BJ (cell line): ENCODE measurements at regions of chr11 and their contacts with region 1.

Region 1: GRCh38 chr11:65593518-65594298 is 1.9 kb downstream of the KCNK7 start:
- DNase-seq: no peak
- H3K4me3 ChIP-seq: no peak overlapping the region
- H3K27me3 ChIP-seq: no peaks in the 10 kb centered on the region
- CTCF ChIP-seq: peak; percentile 78

Region 2: GRCh38 chr11:65308281-65309093 is 285.2 kb before region 1 on chr11:
- CTCF ChIA-PET with region 1: no interaction called
- POLR2A ChIA-PET with region 1: no interaction called
- DNase-seq: no peak
- H3K4me3 ChIP-seq: no peak overlapping the region
- H3K27me3 ChIP-seq: no peaks in the 10 kb centered on the region
- CTCF ChIP-seq: no peak

Region 3: DNA sequence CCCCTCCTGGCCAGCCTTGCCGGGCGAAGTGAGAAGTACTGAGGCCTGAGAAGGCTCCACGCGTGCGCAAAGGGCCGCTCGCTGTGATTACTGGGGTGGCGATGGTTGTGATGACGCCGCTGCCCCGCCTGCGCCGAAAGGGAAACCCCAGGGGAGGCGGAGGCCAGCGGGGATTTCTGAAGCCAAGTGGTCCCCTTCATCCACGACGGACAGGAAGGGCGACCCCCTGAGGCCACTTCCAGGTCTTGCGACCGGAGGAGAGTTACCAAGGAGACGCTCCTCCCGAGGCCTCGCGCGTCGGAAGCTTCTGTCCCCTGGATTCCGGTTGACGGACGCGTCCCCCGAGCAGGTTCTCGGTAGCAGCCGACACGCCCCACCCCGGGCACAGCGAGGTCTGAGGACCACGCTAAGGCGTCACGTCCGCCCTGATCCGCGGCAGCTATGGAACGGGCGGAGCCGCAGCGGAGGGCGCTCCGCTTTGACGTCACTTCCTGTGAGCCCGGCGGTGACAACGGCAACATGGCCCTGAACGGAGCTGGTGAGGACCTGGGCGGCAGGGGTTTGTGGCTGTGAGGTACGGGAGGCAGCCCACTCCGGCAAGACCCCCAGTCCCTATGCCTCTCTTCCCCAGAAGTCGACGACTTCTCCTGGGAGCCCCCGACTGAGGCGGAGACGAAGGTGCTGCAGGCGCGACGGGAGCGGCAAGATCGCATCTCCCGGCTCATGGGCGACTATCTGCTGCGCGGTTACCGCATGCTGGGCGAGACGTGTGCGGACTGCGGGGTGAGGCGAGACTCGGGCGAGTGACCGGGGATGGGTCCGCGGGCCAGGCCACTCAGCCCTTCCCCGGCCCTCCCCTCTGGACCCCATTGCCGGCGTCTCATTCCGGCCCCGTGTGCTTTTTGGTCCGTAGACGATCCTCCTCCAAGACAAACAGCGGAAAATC is 23.5 kb before region 1 on chr11 and contains the start of gene ZNRD2:
- CTCF ChIA-PET with region 1: interaction called, 83 read pairs
- POLR2A ChIA-PET with region 1: no interaction called
- DNase-seq: peak; percentile 89
- H3K4me3 ChIP-seq: peak within 1 kb of the TSS; percentile 93
- H3K27me3 ChIP-seq: no peaks in the 10 kb centered on the region
- CTCF ChIP-seq: peak; percentile 57
- polyA plus RNA-seq, gene ZNRD2: 48.7 and 73.3 TPM in 2 replicates

Region 4: GRCh38 chr11:65606876-65607613 is 13.3 kb after region 1 on chr11:
- CTCF ChIA-PET with region 1: interaction called, 43 read pairs
- POLR2A ChIA-PET with region 1: no interaction called
- DNase-seq: peak; percentile 86
- H3K4me3 ChIP-seq: peak overlapping the region; percentile 18
- H3K27me3 ChIP-seq: no peaks in the 10 kb centered on the region
- CTCF ChIP-seq: no peak